Lower leg skin (tissue), 4 donors: ENCODE measurements at regions of chr10 and their contacts with region 1.

Region 1: GRCh38 chr10:74377476-74377875 is 226.5 kb downstream of the ADK start:
- DNase-seq: no peak
- H3K4me3 ChIP-seq: no peak overlapping the region
- CTCF ChIP-seq: no peak
- POLR2A ChIP-seq: no peak

Region 2: DNA sequence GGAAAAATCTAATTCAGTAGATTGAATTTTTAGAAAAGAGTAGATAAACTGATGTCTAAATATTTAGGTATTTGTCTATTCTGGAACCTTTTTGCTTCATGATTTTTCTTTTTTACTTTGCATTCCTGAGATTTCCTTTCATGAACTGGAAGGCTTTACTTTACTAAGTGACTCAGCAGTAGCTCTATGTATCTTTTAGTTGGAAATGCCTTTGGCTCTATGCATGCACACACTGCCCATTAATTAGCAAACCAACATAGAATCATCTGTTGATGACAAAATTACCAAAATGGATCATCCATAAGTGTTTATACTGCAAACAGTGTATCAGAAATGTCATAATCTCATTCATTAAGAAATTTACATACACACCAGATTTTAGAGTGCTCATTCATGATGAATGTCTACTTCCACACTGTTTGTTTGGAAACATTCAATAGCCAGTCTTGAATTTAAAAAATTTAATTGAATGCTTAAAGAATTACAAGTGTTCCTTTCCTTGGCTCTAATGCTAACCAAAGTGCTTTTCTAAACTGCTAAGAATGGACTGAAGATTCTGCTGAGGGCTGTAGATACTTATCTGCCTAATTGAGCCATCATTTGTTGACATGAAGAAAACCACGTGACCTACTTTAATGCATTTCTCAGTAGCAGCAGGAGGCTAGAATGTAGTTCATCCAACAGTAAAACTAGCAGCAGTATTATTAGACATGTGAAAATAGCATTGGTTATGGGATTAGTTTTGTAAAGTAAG is 55.5 kb after region 1 on chr10:
- intact Hi-C with region 1: no loop called
- DNase-seq: no peak
- H3K4me3 ChIP-seq: no peak overlapping the region
- CTCF ChIP-seq: no peak
- POLR2A ChIP-seq: no peak

Region 3: DNA sequence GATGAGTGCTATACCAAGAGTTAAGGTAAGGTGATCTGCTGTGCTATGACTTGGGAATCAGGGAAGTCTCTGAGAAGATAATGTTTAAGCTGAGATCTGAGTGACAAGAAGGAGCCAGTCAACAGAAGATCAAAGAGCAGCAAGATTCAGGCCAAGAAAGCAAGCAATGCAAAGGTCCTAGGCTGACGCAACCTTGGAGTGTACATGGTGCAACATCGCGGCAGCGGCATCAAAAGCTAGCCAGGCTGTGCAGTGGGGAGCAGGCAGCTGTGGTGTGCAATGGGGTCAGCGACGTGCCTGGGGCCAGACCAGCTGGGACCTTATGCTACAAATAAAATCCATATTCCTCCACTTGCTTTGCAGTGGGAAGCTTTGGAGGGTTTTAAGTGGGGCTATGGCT is 1378.1 kb after region 1 on chr10:
- intact Hi-C with region 1: loop called (anchors 5 kb)
- DNase-seq: no peak
- H3K4me3 ChIP-seq: no peak overlapping the region
- CTCF ChIP-seq: no peak
- POLR2A ChIP-seq: no peak